GM10248 (cell line): ENCODE measurements at regions of chrX and their contacts with region 1.

Region 1: DNA sequence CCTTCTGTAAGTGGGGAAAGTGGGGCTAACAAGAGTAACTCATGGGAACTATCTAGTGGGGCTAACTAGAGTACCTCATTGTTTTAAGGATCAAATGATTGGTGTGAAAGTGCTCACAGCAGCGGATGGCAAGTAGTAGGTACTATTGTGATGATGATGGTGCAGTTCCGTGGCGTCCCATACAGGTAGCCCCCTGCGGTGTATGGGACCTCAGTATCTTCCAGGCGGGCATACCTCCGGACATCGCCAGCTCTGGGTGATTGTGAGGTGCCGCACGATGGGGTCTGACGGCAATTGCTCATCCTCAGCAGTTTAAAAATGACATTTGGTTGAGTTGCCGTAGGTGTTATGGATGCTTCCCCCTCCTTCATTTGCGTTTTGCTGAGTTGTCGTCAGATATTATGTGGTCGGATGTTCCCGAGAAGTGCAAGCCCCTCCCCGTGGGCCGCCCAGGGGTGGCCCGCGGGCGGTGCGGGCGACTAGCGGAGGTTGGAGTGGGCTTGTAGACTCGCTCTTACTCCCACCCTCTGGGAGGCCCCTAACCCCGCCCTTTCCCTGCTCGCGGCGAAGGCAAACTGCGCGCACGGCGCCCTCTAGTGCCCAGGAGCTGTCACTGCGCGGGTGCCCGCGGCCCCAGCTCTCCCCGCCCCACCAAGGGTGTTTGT is 18.3 kb upstream of the GPR101 start:
- DNase-seq: peak; percentile 78
- CTCF ChIP-seq: peak; percentile 84

Region 2: DNA sequence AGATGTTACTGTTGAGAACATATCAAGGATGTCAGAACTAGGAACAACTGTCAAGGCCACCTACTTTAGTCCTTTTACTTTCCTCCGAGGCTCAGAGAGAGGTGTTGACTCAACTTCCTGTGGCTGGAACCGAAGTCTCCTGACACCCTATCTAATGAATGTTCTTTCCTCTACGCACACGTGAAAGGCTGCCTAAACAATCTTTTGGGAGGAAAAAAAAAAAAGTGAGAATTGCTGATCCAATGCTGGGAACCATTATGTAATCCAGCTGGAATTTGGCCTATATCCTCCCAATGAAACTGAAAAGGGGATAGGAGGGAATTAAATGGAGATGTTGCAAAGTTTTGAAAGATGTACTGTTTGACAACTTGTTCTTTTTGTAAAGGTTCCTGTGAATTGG is 792.6 kb before region 1 on chrX:
- CTCF ChIA-PET with region 1: no interaction called
- POLR2A ChIA-PET with region 1: no interaction called
- DNase-seq: no peak
- CTCF ChIP-seq: no peak

Region 3: DNA sequence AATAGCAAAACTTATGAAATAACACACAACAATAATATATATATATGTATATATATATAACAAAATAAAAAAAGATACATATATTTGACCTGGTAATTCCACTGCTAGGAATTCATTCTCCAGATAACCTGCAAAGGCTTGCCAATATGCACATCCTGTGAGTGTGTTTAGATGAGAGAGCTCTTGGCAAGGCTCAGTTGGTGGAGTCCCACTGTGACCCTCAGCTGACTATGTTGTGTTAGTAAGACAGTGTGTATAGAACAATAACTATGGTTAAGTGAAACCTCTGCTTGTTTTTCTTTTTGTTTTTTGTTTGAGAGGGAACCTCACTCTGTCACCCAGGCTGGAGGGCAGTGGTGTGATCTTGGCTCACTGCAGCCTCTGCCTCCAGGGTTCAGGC is 132.1 kb before region 1 on chrX:
- CTCF ChIA-PET with region 1: no interaction called
- POLR2A ChIA-PET with region 1: no interaction called
- DNase-seq: no peak
- CTCF ChIP-seq: no peak

Region 4: DNA sequence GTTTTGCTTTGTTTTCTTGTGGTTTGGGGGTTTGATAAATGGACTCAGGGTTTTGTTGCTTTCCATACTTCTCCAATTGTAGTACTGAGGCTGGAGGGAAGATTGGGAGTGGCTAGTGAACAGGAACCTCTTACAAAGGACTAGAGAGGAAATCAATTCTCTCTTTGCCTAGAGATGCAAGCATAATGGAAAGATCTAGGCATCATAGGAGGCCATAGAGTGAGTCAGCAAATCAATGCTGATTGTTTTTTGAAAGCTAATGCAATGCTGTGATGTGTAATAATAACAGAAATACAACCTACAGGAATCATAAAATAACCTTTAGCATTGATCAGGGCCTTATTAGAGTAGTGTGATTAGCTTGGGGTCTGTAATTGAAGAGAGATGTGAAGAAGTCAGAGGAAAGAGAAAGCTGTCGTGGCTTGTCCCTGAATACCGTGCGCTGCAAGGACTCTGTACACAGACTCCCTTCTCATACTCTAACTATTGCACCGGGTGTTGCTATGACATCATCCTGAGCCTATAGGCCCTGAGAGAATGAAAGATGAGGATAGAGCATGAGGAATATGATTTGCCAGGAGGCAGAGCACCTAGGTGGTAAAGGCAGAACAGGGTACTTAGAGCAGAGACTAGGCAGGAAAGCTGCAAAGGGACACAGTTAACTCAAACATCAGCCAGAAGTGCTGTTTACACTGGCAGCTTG is 11.0 kb after region 1 on chrX:
- CTCF ChIA-PET with region 1: interaction called, 11 read pairs
- POLR2A ChIA-PET with region 1: no interaction called
- DNase-seq: no peak
- CTCF ChIP-seq: no peak